ENCODE measurements at regions of chr3 and their contacts with region 1.

Region 1: DNA sequence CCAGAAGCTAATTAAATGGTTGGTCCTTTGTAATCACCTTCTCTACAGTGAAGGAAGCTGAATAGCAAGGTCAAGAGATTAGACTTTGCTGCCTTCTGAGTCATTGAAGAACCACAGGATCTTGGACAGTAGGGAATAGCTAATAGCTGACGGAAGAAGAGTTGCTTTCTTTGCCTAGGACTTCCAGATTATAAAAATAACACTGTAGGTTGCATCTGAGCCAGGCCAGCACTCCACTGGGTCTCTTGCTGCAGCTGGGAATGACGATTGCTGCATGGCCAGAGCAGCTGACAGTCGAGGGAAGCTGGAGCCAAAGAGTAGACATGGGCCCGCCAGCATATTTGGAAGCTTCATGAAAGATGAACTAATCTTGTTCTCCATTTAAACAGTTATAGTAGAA is 81.5 kb upstream of the KCNMB2 start:
- DNase-seq: peak; percentile 58
- H3K4me3 ChIP-seq: no peak overlapping the region
- H3K27ac ChIP-seq: no peak overlapping the region
- H3K4me1 ChIP-seq: no peaks in the 10 kb centered on the region
- H3K27me3 ChIP-seq: no peaks in the 10 kb centered on the region
- CTCF ChIP-seq: no peak
- POLR2A ChIP-seq: no peak

Region 2: GRCh38 chr3:178950676-178951075 is 495.9 kb after region 1 on chr3:
- intact Hi-C with region 1: loop called (anchors 10 kb)
- DNase-seq: no peak
- H3K4me3 ChIP-seq: no peak overlapping the region
- H3K27ac ChIP-seq: no peak overlapping the region
- H3K4me1 ChIP-seq: no peaks in the 10 kb centered on the region
- H3K27me3 ChIP-seq: no peaks in the 10 kb centered on the region
- CTCF ChIP-seq: no peak
- POLR2A ChIP-seq: no peak

Measured in testis (tissue), 5 donors.